ENCODE measurements at regions of chr10 and their contacts with region 1.

Region 1: DNA sequence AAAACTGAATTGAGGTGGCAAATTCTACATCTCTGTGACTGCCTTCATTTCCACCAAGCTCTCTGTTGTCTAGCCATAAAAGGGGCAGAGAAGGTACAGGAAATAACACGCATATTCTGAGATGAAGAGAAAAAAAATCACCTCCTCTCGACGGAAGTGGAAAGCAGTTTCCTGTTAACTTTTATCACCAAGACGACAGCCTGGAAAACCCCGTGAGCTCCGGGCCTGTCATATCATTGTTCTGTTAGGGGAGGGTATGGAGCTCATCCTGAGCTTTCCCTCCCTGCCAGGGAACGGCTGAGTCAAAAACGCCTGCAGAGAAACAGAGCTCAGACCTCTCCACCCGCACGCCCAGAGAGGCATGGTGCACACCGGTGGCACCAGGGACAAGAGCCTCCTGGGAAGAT is 200.3 kb downstream of the PRPF18 start:
- DNase-seq: no peak
- H3K4me3 ChIP-seq: no peak overlapping the region
- H3K27ac ChIP-seq: peak overlapping the region; percentile 18 to 72 (median 32)
- H3K4me1 ChIP-seq: peaks cover 0 to 29% (median 15%) of the 10 kb centered on the region in 4 donors
- H3K27me3 ChIP-seq: no peaks in the 10 kb centered on the region
- CTCF ChIP-seq: no peak
- EP300 ChIP-seq: no peak
- POLR2A ChIP-seq: no peak

Region 2: DNA sequence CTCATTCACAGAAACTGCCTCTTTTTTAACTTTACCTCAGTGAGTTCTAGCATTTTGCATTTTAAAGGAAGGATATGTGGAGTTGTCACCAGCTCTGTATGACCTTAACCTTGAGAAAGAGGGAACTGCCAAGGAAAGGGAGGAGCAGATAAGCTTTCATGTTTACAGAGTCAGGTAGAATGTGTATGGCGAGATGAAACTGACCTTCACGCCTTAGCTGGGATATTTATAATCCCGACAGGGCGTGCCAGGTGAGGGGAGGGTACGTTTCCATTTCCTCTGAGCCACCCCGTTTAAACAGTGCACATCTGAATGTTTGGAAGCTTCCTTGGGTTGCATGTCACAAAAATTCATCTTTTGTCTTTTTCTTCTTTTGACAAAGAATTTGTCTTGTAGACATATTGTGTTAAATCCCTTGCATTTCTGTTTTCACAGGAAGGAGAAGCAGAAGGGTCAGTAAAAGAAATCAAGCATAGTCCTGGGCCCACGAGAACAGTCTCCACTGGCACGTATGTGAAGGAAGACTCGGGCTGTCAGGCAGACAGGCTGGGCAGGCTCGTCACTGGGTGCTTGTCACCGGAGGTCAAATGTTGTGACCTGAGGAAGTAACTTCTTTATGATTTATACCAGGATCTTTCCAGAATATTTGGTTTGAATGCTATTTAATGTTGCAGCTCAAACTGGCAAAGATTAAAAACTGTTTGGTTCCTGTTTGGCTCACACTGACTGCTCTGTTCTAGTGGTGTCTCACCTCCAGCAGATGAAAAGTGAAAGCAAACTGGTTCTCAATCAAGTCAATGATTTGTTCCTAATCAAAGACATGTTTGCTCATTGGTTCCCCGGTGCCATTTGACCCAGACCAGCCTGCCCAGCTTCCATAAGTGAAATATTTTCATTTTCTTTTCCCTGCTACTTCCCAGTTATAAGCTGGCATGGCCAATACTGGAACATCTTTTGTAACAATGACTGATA is 670.9 kb before region 1 on chr10:
- intact Hi-C with region 1: no loop called
- DNase-seq: no peak
- H3K4me3 ChIP-seq: no peak overlapping the region
- H3K27ac ChIP-seq: peak overlapping the region in 1 of 4 donors; percentile 10
- H3K4me1 ChIP-seq: no peaks in the 10 kb centered on the region
- H3K27me3 ChIP-seq: no peaks in the 10 kb centered on the region
- CTCF ChIP-seq: no peak
- EP300 ChIP-seq: no peak
- POLR2A ChIP-seq: no peak

Region 3: GRCh38 chr10:13847201-13847631 is 60.2 kb after region 1 on chr10:
- intact Hi-C with region 1: no loop called
- DNase-seq: no peak
- H3K4me3 ChIP-seq: no peak overlapping the region
- H3K27ac ChIP-seq: no peak overlapping the region
- H3K4me1 ChIP-seq: peaks cover 0 to 12% (median 0%) of the 10 kb centered on the region in 4 donors
- H3K27me3 ChIP-seq: no peaks in the 10 kb centered on the region
- CTCF ChIP-seq: no peak
- EP300 ChIP-seq: no peak
- POLR2A ChIP-seq: no peak

Region 4: GRCh38 chr10:13930120-13930519 is 143.1 kb after region 1 on chr10:
- intact Hi-C with region 1: no loop called
- DNase-seq: no peak
- H3K4me3 ChIP-seq: no peak overlapping the region
- H3K27ac ChIP-seq: no peak overlapping the region
- H3K4me1 ChIP-seq: peaks cover 0 to 10% (median 5%) of the 10 kb centered on the region in 4 donors
- H3K27me3 ChIP-seq: no peaks in the 10 kb centered on the region
- CTCF ChIP-seq: no peak
- EP300 ChIP-seq: no peak
- POLR2A ChIP-seq: no peak

Region 5: GRCh38 chr10:13949844-13950595 is 163.0 kb after region 1 on chr10:
- intact Hi-C with region 1: loop called (anchors 5 kb)
- DNase-seq: no peak
- H3K4me3 ChIP-seq: no peak overlapping the region
- H3K27ac ChIP-seq: peak overlapping the region in 1 of 4 donors; percentile 26
- H3K4me1 ChIP-seq: peaks cover 0 to 14% (median 12%) of the 10 kb centered on the region in 4 donors
- H3K27me3 ChIP-seq: no peaks in the 10 kb centered on the region
- CTCF ChIP-seq: no peak
- EP300 ChIP-seq: no peak
- POLR2A ChIP-seq: no peak

Region 6: GRCh38 chr10:14093730-14094484 is 306.9 kb after region 1 on chr10:
- intact Hi-C with region 1: loop called (anchors 2 kb)
- DNase-seq: no peak
- H3K4me3 ChIP-seq: no peak overlapping the region
- H3K27ac ChIP-seq: no peak overlapping the region
- H3K4me1 ChIP-seq: no peaks in the 10 kb centered on the region
- H3K27me3 ChIP-seq: no peaks in the 10 kb centered on the region
- CTCF ChIP-seq: peak in 3 of 4 experiments; percentile 19 to 53 (median 25)
- EP300 ChIP-seq: no peak
- POLR2A ChIP-seq: no peak

Region 7: GRCh38 chr10:14478604-14479003 is 691.6 kb after region 1 on chr10:
- intact Hi-C with region 1: loop called (anchors 2 kb)
- DNase-seq: peak; percentile 77
- H3K4me3 ChIP-seq: no peak overlapping the region
- H3K27ac ChIP-seq: peak overlapping the region in 1 of 4 donors; percentile 6
- H3K4me1 ChIP-seq: peaks cover 0 to 21% (median 5%) of the 10 kb centered on the region in 4 donors
- H3K27me3 ChIP-seq: no peaks in the 10 kb centered on the region
- CTCF ChIP-seq: peak in 3 of 4 experiments; percentile 20 to 43 (median 37)
- EP300 ChIP-seq: no peak
- POLR2A ChIP-seq: no peak